ENCODE measurements at regions of chr1 and their contacts with region 1.

Region 1: DNA sequence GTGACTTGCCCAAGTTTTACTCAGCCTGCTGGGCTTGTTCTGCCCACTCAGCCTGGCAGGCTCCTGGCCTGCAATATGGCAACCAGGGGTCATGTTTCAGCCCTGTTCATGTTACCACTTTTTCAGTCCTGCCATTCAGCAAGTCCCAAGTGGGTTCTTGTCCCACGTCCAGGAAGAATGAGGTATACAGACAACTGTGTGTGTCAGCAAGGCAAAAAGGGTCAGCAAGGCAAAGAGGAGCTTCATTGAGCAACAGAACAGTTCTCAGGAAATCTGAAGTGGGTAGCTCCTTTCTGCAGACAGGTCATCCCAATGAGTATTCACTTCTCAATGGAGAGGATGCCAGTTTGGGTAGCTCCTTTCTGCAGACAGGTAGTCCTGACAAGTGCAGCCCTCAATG is 1233.3 kb upstream of the B3GALT2 start:
- DNase-seq: no peak
- ATAC-seq: no peak
- H3K4me3 ChIP-seq: no peak overlapping the region
- H3K27ac ChIP-seq: no peak overlapping the region
- H3K4me1 ChIP-seq: no peaks in the 10 kb centered on the region
- H3K27me3 ChIP-seq: no peaks in the 10 kb centered on the region
- CTCF ChIP-seq: no peak
- EP300 ChIP-seq: no peak
- POLR2A ChIP-seq: no peak
- RAD21 ChIP-seq: no peak

Region 2: DNA sequence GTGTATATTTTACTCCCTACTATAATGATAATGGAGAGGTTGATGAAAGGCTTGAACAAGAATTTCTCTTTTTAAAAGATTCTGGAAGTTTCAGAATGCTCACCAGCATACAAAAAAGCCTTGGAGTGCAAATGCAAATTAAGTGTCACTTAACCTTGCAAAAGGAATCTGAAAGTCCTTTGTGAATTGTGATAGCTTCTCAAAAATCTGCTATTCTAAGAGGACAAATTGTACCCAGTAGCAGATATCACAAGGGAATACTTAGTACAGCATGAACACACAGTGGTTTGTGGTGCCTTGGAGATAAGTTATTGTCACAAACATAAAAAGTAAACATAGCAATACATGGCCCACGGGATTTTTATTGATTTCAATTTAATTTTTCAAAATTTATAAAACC is 25.0 kb before region 1 on chr1:
- CTCF ChIA-PET with region 1: no interaction called
- POLR2A ChIA-PET with region 1: no interaction called
- RAD21 ChIA-PET with region 1: no interaction called
- SMC1A ChIA-PET with region 1: no interaction called
- in situ Hi-C with region 1: no loop called
- intact Hi-C with region 1: no loop called
- DNase-seq: no peak
- ATAC-seq: no peak
- H3K4me3 ChIP-seq: no peak overlapping the region
- H3K27ac ChIP-seq: no peak overlapping the region
- H3K4me1 ChIP-seq: no peaks in the 10 kb centered on the region
- H3K27me3 ChIP-seq: no peaks in the 10 kb centered on the region
- CTCF ChIP-seq: no peak
- EP300 ChIP-seq: no peak
- POLR2A ChIP-seq: no peak
- RAD21 ChIP-seq: no peak

Region 3: DNA sequence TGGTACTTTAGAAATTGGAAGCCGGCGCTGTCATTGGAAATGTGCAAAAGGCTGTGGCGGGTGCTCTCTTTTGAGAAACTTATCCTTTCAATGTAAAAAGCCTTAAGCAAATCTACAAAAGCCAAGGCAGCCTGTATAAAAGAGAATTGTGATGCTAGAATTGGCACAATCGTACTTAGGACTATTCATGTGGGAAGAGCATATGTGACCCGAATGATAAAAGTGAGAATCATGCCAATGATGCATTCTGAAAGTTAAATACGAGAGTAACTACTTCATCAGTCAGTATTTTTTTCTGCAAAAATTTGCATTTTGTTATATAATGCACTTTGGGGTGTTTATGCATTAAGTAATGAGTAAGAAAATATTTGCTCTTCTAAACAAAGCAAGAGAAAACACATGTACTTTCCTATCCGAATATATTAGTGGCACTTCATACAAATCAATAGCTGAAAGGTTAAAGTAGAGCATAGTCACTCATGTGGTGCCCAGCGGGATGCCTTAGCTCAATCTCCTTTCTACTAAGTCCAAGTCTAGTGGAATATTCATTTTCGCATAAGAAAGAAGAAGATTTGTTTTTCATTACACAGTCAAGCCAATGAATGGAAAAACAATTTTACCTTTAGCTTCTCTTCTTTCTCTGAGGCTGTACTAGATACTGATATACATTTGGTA is 23.3 kb after region 1 on chr1:
- CTCF ChIA-PET with region 1: no interaction called
- POLR2A ChIA-PET with region 1: no interaction called
- RAD21 ChIA-PET with region 1: no interaction called
- SMC1A ChIA-PET with region 1: no interaction called
- in situ Hi-C with region 1: no loop called
- intact Hi-C with region 1: no loop called
- DNase-seq: no peak
- ATAC-seq: no peak
- H3K4me3 ChIP-seq: no peak overlapping the region
- H3K27ac ChIP-seq: no peak overlapping the region
- H3K4me1 ChIP-seq: no peaks in the 10 kb centered on the region
- H3K27me3 ChIP-seq: no peaks in the 10 kb centered on the region
- CTCF ChIP-seq: no peak
- EP300 ChIP-seq: no peak
- POLR2A ChIP-seq: no peak
- RAD21 ChIP-seq: no peak

Region 4: DNA sequence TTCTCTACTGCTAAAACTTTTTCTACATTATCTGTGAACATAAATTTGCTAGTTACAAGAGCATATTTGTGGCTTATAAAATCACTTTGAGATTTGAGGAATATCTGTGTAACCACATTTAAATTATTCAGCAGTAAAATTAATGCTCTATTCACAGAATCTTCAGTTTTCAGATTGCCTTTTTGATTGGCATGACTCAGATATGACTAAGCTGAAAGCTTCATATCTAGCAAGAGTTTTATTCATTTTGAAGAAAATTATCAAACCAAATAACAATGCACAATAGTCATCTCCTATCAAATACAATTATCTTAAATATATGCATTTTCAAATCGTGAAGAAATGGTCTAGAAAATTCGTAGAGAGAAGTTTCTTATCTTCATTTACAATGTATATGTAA is 264.9 kb after region 1 on chr1:
- CTCF ChIA-PET with region 1: no interaction called
- POLR2A ChIA-PET with region 1: interaction called, 10 read pairs
- RAD21 ChIA-PET with region 1: no interaction called
- SMC1A ChIA-PET with region 1: no interaction called
- in situ Hi-C with region 1: no loop called
- intact Hi-C with region 1: no loop called
- DNase-seq: no peak
- ATAC-seq: no peak
- H3K4me3 ChIP-seq: no peak overlapping the region
- H3K27ac ChIP-seq: no peak overlapping the region
- H3K4me1 ChIP-seq: no peaks in the 10 kb centered on the region
- H3K27me3 ChIP-seq: no peaks in the 10 kb centered on the region
- CTCF ChIP-seq: no peak
- EP300 ChIP-seq: no peak
- POLR2A ChIP-seq: no peak
- RAD21 ChIP-seq: no peak

Measured in GM12878 (cell line).